SK-N-SH (cell line): ENCODE measurements at regions of chr6 and their contacts with region 1.

Region 1: GRCh38 chr6:95830859-95831557 is 184.8 kb upstream of the FUT9 start:
- DNase-seq: no peak
- H3K4me3 ChIP-seq: no peak overlapping the region
- H3K27ac ChIP-seq: no peak overlapping the region
- H3K4me1 ChIP-seq: no peaks in the 10 kb centered on the region
- H3K27me3 ChIP-seq: no peaks in the 10 kb centered on the region
- CTCF ChIP-seq: no peak
- EP300 ChIP-seq: no peak
- RAD21 ChIP-seq: no peak

Region 2: GRCh38 chr6:95519228-95520037 is 311.6 kb before region 1 on chr6:
- CTCF ChIA-PET with region 1: no interaction called
- POLR2A ChIA-PET with region 1: no interaction called
- DNase-seq: no peak
- H3K4me3 ChIP-seq: no peak overlapping the region
- H3K27ac ChIP-seq: no peak overlapping the region
- H3K4me1 ChIP-seq: no peaks in the 10 kb centered on the region
- H3K27me3 ChIP-seq: no peaks in the 10 kb centered on the region
- CTCF ChIP-seq: no peak
- EP300 ChIP-seq: no peak
- RAD21 ChIP-seq: no peak

Region 3: GRCh38 chr6:95819939-95820338 is 11.1 kb before region 1 on chr6:
- CTCF ChIA-PET with region 1: interaction called, 11 read pairs
- POLR2A ChIA-PET with region 1: no interaction called
- DNase-seq: no peak
- H3K4me3 ChIP-seq: no peak overlapping the region
- H3K27ac ChIP-seq: no peak overlapping the region
- H3K4me1 ChIP-seq: no peaks in the 10 kb centered on the region
- H3K27me3 ChIP-seq: no peaks in the 10 kb centered on the region
- CTCF ChIP-seq: peak; percentile 47
- EP300 ChIP-seq: no peak
- RAD21 ChIP-seq: no peak